Activated CD4-positive, alpha-beta T cell treated with anti-CD3 and anti-CD28 coated beads, Interleukin-2, amount 10 ng/mL, durations not matched to agents 7 days and 5 days (primary cell): ENCODE measurements at regions of chr12 and their contacts with region 1.

Region 1: DNA sequence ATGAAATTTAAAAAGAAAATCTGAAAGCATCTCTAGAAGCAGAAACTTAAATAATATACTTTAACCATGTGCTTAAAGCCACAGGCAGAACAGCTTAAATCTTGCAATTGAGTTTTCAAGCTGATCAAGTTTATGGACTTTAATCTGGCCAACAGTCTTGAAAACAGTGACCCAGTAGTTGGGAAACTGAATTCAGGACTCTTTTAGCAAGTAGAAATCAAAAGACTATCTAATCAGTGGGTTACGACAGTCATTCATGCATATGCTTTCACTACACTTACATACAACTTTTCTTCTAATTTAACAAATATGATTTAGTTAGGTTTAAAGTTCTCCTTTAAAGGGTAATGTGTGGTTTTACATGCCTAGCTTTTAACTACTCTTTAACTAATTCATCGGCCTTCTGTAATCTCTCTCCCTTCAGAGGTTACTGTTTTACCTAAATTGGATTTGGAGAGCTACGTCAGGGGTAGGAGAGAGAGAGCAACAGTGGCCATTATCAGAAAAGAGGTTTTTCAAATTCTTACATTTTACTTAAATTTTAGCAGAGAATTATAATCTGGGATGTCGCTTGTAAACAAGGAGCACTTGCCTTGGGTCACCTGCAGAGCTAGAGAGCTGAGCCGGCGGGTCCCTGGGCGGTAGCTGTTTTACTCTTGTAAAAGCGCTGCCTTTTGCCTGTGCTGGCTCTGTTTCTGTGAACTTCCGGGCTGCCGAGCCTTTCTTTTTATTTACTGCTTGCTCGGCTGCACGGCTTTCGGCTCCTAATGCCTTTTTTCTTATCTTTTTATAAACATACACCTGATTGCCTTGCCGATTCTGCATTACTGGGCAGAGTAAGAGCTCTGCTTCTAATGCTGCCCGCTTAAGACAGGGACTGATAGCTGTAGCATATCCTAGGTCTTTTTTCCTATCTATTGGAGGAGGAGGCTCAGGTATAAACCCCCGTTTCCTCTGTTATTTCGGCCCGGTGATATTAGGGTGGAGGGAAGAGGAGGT is 17.4 kb upstream of the LYZ start:
- DNase-seq: peak; percentile 73
- H3K4me3 Mint-ChIP-seq: peak overlapping the region; percentile 82
- H3K27ac Mint-ChIP-seq: peak overlapping the region; percentile 99
- H3K4me1 Mint-ChIP-seq: peaks cover 49% of the 10 kb centered on the region
- H3K27me3 Mint-ChIP-seq: peaks cover 4% of the 10 kb centered on the region

Region 2: DNA sequence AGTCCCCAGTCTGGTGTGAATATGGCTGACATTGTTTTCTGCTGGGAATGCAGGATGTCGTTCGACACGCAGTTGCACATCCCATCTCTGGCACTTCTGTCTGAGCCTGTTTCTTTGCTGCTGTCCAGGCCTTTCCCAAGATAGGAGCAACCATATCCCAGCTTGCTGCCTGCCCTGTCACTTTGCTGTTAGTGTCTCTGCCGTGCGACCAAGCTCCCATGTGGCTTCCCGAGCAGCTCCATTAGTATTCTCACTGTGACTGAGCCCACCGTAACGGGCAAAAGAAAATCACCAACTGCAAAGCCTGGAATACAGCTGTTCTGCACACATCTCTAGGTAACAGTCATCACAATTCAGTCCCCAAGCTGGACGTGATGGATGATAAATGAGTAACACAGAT is 157.4 kb before region 1 on chr12:
- CTCF ChIA-PET with region 1: no interaction called
- POLR2A ChIA-PET with region 1: no interaction called
- DNase-seq: no peak
- H3K4me3 Mint-ChIP-seq: no peak overlapping the region
- H3K27ac Mint-ChIP-seq: no peak overlapping the region
- H3K4me1 Mint-ChIP-seq: no peaks in the 10 kb centered on the region
- H3K27me3 Mint-ChIP-seq: peaks cover 3% of the 10 kb centered on the region

Region 3: DNA sequence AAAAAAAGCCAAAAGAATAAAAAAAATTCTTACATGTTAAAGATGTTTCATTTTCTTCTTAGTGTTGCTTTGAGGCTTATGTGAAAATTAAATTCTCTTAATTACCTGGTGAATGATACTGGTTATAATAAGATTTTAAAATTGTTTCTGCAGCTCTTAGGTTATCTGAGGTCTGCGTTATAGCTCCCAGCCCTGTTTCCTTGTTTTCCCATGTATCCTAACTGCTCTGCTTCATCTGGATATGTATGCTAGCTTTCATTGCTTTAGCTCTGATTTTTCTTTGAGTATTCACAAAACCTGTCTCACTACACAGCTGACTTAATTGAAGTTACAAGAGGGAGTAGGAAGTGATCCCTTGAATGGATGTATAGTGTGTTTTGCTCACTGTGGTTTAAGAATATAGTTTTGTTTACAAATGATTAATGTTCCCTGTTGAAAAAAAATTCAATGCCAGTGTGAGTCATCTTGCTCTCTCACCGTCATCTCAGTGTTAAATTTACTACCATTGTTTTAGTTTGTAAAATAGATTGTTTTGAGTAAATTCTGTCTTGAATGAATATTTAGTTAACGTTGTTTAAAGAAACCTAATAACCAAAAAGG is 64.6 kb before region 1 on chr12:
- CTCF ChIA-PET with region 1: no interaction called
- POLR2A ChIA-PET with region 1: no interaction called
- DNase-seq: no peak
- H3K4me3 Mint-ChIP-seq: no peak overlapping the region
- H3K27ac Mint-ChIP-seq: no peak overlapping the region
- H3K4me1 Mint-ChIP-seq: peaks cover 3% of the 10 kb centered on the region
- H3K27me3 Mint-ChIP-seq: no peaks in the 10 kb centered on the region

Region 4: GRCh38 chr12:69341328-69341727 is 10.6 kb after region 1 on chr12:
- CTCF ChIA-PET with region 1: interaction called, 14 read pairs
- POLR2A ChIA-PET with region 1: no interaction called
- DNase-seq: no peak
- H3K4me3 Mint-ChIP-seq: no peak overlapping the region
- H3K27ac Mint-ChIP-seq: no peak overlapping the region
- H3K4me1 Mint-ChIP-seq: no peaks in the 10 kb centered on the region
- H3K27me3 Mint-ChIP-seq: peaks cover 4% of the 10 kb centered on the region

Region 5: DNA sequence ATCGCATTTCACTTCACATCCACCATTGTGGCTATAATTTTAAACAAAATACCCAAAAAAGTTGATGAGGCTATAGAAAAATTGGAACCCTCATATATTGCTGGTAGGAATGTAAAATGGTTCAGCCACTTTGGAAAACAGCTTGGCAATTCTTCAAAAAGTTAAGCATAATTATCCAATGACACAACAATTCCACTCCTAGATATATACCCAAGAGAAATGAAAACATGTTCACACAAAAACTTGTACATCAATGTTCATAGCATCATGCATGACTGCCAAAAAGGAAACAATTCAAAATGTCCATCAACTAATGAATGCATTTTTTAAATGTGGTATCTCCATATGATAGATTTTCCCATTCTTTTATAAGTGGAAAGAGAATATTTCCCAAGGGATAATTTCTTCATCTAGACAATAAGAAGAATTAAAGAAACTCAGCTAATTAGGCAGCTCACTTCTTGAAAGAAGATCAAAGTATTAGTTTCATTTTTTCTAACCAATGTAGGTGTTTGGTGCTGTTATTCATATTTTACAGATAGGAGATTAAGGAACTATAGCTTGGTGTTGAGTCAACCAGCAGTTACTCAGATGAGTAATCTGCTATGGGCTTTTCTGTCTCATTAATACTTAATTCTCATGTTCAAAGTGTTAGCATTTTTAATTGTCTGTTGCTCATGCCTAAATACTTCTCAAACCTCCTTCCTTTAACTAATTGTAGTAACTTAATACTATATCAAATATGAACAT is 61.6 kb after region 1 on chr12:
- CTCF ChIA-PET with region 1: no interaction called
- POLR2A ChIA-PET with region 1: no interaction called
- DNase-seq: no peak
- H3K4me3 Mint-ChIP-seq: no peak overlapping the region
- H3K27ac Mint-ChIP-seq: no peak overlapping the region
- H3K4me1 Mint-ChIP-seq: no peaks in the 10 kb centered on the region
- H3K27me3 Mint-ChIP-seq: no peaks in the 10 kb centered on the region